ENCODE measurements at regions of chr7 and their contacts with region 1.

Region 1: GRCh38 chr7:80060218-80060806 is 74.3 kb upstream of the GNAI1 start:
- DNase-seq: peak; percentile 81
- H3K4me3 ChIP-seq: no peak overlapping the region
- H3K27ac ChIP-seq: no peak overlapping the region
- H3K4me1 ChIP-seq: no peaks in the 10 kb centered on the region
- H3K27me3 ChIP-seq: no peaks in the 10 kb centered on the region
- CTCF ChIP-seq: peak; percentile 10 to 15
- POLR2A ChIP-seq: no peak

Region 2: DNA sequence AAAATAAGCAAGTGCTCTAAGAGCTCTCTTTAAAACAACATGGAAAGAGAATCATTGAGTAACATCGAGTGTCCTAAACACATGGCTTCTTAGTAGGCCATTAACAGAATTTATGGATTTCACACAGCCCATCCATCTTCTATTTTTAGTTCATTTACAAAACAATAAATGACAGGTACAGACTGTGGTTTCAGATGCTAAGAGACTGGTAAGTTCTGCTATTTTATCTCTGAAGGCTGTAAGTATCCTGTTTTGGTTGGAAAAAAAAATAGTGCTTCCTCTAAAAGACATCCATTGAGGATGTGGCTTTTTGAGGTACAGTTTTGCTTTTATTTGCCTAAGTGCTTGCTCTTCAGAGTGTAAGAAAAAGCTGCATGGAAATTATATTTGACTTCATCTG is 47.0 kb after region 1 on chr7:
- CTCF ChIA-PET with region 1: interaction called, 10 read pairs
- POLR2A ChIA-PET with region 1: no interaction called
- dilution Hi-C with region 1: no loop called
- intact Hi-C with region 1: no loop called
- DNase-seq: peak; percentile 59
- H3K4me3 ChIP-seq: peak overlapping the region in 1 of 3 experiments; percentile 40
- H3K27ac ChIP-seq: peak overlapping the region; percentile 58
- H3K4me1 ChIP-seq: peaks cover 28% of the 10 kb centered on the region
- H3K27me3 ChIP-seq: no peaks in the 10 kb centered on the region
- CTCF ChIP-seq: no peak
- POLR2A ChIP-seq: no peak

Region 3: DNA sequence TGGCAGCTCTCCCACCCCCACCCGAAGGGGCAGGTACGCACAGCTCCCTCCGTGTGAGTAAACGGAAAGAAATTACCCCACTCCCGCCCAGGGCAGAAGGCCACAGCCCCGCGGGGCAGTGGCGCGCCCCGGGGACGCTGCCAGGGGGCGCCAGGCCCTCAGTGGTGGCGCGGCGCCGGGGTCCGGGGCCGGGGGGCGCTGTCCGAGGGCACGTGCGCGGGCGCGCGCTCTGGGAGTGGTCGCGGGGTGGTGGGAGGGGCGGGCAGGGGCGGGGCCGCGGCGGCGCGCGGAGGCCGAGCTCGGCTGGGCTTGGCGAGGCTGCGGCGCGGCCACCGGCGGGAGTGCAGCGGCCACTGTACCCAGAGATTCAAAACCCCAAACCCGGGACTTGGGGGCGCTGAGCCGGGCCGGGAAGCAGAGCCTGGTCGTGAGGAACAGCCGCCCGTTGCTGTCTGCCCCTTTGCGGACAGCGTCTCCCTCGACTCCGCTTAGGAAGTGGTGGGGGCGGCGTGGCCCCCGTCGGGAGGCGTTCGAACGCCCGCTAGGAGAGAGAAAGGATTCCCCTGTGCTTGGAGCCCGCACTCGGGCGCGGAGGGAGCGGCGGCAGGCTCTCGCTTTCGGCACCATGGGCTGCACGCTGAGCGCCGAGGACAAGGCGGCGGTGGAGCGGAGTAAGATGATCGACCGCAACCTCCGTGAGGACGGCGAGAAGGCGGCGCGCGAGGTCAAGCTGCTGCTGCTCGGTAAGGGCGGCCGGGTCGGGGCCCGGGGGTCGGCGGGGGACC is 74.4 kb after region 1 on chr7 and contains the start of gene GNAI1:
- CTCF ChIA-PET with region 1: interaction called, 21 read pairs
- POLR2A ChIA-PET with region 1: no interaction called
- dilution Hi-C with region 1: no loop called
- intact Hi-C with region 1: loop called (anchors 2 kb)
- DNase-seq: peak; percentile 65
- H3K4me3 ChIP-seq: peak within 1 kb of the TSS; percentile 88 to 94 (median 91)
- H3K27ac ChIP-seq: peak within 1 kb of the TSS; percentile 54
- H3K4me1 ChIP-seq: peaks cover 17% of the 10 kb centered on the region
- H3K27me3 ChIP-seq: peaks cover 0 to 1% of the 10 kb centered on the region in 2 experiments
- CTCF ChIP-seq: peak; percentile 30 to 49
- POLR2A ChIP-seq: peak; percentile 70
- total RNA-seq, gene GNAI1: 15.0 and 19.7 TPM in 2 replicates

Region 4: DNA sequence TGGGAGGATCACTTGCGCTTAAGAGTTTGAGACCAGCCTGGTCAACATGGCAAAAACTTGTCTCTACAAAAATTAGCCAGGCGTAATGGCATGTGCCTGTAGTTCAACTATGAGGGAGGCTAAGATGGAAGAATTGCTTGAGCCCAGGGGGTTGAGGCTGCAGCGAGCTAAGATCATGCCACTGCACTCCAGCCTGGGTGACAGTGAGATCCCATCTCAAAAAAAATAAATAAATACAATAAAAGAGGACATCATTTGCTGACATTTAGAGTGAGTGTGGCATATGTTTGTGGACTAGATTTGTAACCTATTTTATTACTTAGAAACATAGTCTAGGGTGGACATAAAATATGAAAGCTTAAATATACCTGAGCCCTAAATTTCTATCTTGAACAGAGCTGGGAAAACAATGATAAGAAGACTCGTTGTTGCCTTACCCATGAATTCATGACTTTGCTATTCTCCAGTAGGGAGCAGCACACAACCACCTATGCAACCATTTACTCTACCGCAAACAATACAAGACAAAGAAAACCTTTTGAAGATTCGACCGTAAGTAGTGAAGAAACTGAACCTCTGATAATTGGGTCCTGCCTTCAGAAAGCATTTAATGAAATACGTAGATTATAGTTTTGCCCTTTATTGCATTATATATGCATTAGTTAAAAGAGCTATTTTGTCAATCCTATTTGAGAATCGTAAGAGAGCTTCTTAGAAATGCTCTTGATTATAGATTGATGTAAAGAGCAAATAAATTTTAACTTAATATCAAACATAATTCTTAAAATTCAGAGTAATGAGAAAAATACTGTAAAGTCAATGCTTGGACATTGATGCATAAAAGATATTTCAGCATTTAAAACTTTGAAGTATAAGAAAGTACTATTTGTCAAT is 368.1 kb after region 1 on chr7:
- CTCF ChIA-PET with region 1: interaction called, 21 read pairs
- POLR2A ChIA-PET with region 1: no interaction called
- dilution Hi-C with region 1: no loop called
- intact Hi-C with region 1: no loop called
- DNase-seq: peak; percentile 63
- H3K4me3 ChIP-seq: no peak overlapping the region
- H3K27ac ChIP-seq: no peak overlapping the region
- H3K4me1 ChIP-seq: no peaks in the 10 kb centered on the region
- H3K27me3 ChIP-seq: no peaks in the 10 kb centered on the region
- CTCF ChIP-seq: peak; percentile 16 to 32
- POLR2A ChIP-seq: no peak

Region 5: GRCh38 chr7:80659120-80660055 is 599.1 kb after region 1 on chr7:
- CTCF ChIA-PET with region 1: interaction called, 33 read pairs
- POLR2A ChIA-PET with region 1: no interaction called
- dilution Hi-C with region 1: no loop called
- intact Hi-C with region 1: loop called (anchors 1 kb)
- DNase-seq: peak; percentile 44
- H3K4me3 ChIP-seq: no peak overlapping the region
- H3K27ac ChIP-seq: no peak overlapping the region
- H3K4me1 ChIP-seq: no peaks in the 10 kb centered on the region
- H3K27me3 ChIP-seq: no peaks in the 10 kb centered on the region
- CTCF ChIP-seq: peak; percentile 36 to 45
- POLR2A ChIP-seq: no peak

Region 6: GRCh38 chr7:81469869-81470723 is 1409.8 kb after region 1 on chr7:
- CTCF ChIA-PET with region 1: interaction called, 13 read pairs
- POLR2A ChIA-PET with region 1: no interaction called
- dilution Hi-C with region 1: no loop called
- intact Hi-C with region 1: no loop called
- DNase-seq: peak; percentile 54
- H3K4me3 ChIP-seq: no peak overlapping the region
- H3K27ac ChIP-seq: no peak overlapping the region
- H3K4me1 ChIP-seq: no peaks in the 10 kb centered on the region
- H3K27me3 ChIP-seq: peaks cover 7% of the 10 kb centered on the region in 2 experiments
- CTCF ChIP-seq: peak; percentile 62 to 70
- POLR2A ChIP-seq: no peak